ENCODE measurements at regions of chr10 and their contacts with region 1.

Region 1: GRCh38 chr10:94042001-94042833 is 48.5 kb downstream of the PLCE1 start:
- DNase-seq: peak; percentile 86
- ATAC-seq: peak; percentile 78
- H3K4me3 ChIP-seq: peak overlapping the region; percentile 52
- H3K27ac ChIP-seq: peak overlapping the region; percentile 98
- H3K4me1 ChIP-seq: peaks cover 55% of the 10 kb centered on the region
- H3K27me3 ChIP-seq: no peaks in the 10 kb centered on the region
- CTCF ChIP-seq: peak; percentile 51

Region 2: DNA sequence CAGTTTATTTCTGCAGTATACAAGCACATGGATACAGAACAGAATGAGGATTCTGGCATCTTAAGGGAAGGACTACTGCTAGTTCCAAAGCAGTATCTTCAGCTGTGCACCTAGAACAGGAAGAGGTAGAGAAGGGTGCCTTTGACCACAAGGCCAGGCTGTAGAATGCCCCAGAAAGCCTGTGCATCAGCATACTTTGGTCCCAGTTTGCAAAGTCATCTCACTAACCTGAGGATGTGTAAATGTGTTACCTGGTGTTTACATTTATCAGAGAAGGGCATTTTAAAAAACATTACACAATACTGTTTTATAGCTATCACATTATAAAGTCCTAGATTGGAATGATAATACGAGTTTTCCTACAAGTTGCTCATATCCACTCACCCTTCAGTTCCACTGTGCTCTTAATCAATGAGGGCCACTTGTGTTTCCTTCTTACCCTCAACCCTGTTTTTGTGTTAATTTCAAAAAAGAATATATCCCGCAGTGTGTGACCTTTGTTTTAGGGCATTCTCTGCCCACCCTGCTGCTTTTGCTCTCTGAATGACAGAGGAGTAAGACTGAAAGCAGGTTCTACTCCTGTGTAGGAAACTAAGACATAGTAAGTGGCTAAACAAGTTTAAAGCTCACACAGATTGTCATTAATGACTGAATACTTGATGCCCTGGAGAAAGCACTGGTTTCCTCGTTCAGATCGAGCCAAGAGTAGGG is 145.0 kb before region 1 on chr10:
- CTCF ChIA-PET with region 1: no interaction called
- POLR2A ChIA-PET with region 1: no interaction called
- intact Hi-C with region 1: no loop called
- DNase-seq: no peak
- ATAC-seq: no peak
- H3K4me3 ChIP-seq: no peak overlapping the region
- H3K27ac ChIP-seq: no peak overlapping the region
- H3K4me1 ChIP-seq: peaks cover 12% of the 10 kb centered on the region; the same call in 1 of the 2 replicates
- H3K27me3 ChIP-seq: no peaks in the 10 kb centered on the region
- CTCF ChIP-seq: no peak

Region 3: GRCh38 chr10:93977442-93977841 is 64.8 kb before region 1 on chr10:
- CTCF ChIA-PET with region 1: no interaction called
- POLR2A ChIA-PET with region 1: no interaction called
- intact Hi-C with region 1: no loop called
- DNase-seq: no peak
- ATAC-seq: no peak
- H3K4me3 ChIP-seq: no peak overlapping the region
- H3K27ac ChIP-seq: no peak overlapping the region
- H3K4me1 ChIP-seq: no peaks in the 10 kb centered on the region
- H3K27me3 ChIP-seq: no peaks in the 10 kb centered on the region
- CTCF ChIP-seq: peak; percentile 28; the same call in 1 of the 2 replicates

Region 4: GRCh38 chr10:93993782-93994437 is 48.3 kb before region 1 on chr10 and contains the start of gene PLCE1:
- CTCF ChIA-PET with region 1: interaction called, 5 read pairs
- POLR2A ChIA-PET with region 1: no interaction called
- intact Hi-C with region 1: loop called (anchors 1 kb)
- DNase-seq: peak; percentile 69
- ATAC-seq: peak; percentile 66
- H3K4me3 ChIP-seq: peak within 1 kb of the TSS; percentile 88
- H3K27ac ChIP-seq: peak within 1 kb of the TSS; percentile 13
- H3K4me1 ChIP-seq: peaks cover 48% of the 10 kb centered on the region
- H3K27me3 ChIP-seq: no peaks in the 10 kb centered on the region
- CTCF ChIP-seq: no peak
- total RNA-seq, gene PLCE1: 9.2 and 11.4 TPM in 2 replicates